Uterus (tissue), 4 donors: ENCODE measurements at regions of chr6 and their contacts with region 1.

Region 1: DNA sequence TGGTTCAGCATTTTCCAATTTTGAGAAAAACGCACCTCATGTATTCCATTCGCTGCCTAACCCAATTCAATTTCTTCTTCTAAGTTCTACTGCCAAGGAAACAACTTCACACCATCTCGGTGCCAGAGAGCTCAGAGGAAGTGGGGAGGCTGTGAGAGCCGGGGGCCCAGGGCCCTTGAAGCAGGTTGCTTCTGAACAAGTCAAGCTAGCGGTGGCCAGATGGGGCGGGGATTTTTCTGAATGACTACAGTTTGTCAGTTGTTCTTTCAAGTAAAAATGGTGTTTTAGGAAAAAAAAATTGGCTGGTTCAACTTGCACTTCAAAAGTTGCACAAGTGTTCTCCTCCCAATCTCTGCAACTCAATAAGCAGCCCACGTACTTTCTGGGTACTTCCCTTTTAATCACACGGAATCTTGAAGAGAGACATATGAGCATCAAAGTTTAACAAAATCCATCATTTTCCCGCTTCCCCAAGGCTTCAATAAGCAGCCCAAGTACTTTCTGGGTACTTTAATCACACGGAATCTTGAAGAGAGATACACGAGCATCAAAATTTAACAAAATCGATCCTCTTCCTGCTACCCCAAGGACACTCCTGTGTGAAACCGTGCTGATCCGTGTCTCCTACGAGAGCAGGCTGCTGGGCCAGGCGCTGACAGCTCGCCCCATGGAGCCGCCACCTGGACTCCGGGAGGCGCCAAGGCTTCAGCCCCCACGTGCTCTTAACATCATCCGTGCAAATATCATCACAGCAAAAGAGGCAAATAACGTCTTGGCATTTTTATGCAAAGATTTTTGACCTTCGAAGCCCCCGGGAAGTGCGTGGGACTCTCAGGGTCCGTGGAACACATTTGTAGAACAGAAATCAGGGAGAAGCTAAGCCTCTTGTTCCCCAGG is 186.7 kb upstream of the PDE10A start:
- DNase-seq: peak; percentile 35 to 50
- H3K4me3 ChIP-seq: peak overlapping the region; percentile 5 to 14
- H3K27ac ChIP-seq: peak overlapping the region; percentile 46 to 51
- H3K4me1 ChIP-seq: peaks cover 0 to 1% of the 10 kb centered on the region in 2 donors
- H3K27me3 ChIP-seq: peaks cover 0 to 3% of the 10 kb centered on the region in 2 donors
- CTCF ChIP-seq: no peak
- POLR2A ChIP-seq: no peak

Region 2: DNA sequence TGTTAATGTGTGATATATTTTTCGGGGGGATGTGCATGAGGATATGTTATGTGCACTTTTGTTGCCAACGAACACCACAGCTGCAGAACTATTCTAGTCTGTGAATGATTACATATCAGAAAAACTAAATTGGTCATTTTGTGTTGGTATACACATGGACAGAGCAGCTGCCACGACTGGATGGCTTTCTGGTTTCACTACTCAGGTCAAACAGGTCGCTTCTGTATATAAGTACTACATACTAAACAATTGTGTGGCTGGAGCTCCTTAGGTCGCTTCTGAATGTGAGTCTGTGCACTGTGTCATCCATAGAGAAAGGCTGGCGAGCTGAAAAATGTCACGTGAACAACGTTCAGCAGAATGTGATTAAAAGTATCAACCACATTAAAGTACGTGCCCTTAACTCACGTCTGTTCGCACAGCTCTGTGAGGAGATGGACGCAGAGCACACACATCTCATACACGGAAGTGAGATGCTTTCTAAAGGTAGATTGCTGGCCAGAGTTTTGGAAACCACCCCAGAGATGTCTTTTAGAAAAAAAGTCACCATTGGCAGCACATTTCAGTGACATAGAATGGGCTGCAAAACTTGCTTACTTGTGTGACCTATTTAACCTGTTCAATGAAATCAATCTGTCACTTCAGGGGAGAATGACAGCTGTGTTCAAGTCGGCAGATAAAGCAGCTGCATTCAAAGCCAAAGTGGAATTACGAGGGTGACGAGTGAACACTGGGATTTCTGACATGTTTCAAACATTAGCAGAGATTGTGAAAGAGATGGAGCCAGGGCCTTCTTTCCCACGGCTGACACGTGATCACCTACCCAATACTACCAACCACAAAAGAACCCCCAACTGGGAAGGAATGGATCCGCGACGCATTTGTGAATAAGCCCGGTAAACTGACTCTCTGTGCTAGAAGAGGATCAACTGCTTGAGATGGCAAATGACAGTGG is 363.3 kb before region 1 on chr6:
- intact Hi-C with region 1: no loop called
- DNase-seq: no peak
- H3K4me3 ChIP-seq: no peak overlapping the region
- H3K27ac ChIP-seq: no peak overlapping the region
- H3K4me1 ChIP-seq: no peaks in the 10 kb centered on the region
- H3K27me3 ChIP-seq: no peaks in the 10 kb centered on the region
- CTCF ChIP-seq: no peak
- POLR2A ChIP-seq: no peak

Region 3: GRCh38 chr6:165556116-165556843 is 293.5 kb before region 1 on chr6:
- intact Hi-C with region 1: no loop called
- DNase-seq: no peak
- H3K4me3 ChIP-seq: no peak overlapping the region
- H3K27ac ChIP-seq: peak overlapping the region in 1 of 2 donors; percentile 9
- H3K4me1 ChIP-seq: no peaks in the 10 kb centered on the region
- H3K27me3 ChIP-seq: no peaks in the 10 kb centered on the region
- CTCF ChIP-seq: no peak
- POLR2A ChIP-seq: no peak

Region 4: GRCh38 chr6:165732696-165733488 is 116.9 kb before region 1 on chr6:
- intact Hi-C with region 1: loop called (anchors 10 kb)
- DNase-seq: no peak
- H3K4me3 ChIP-seq: no peak overlapping the region
- H3K27ac ChIP-seq: no peak overlapping the region
- H3K4me1 ChIP-seq: no peaks in the 10 kb centered on the region
- H3K27me3 ChIP-seq: no peaks in the 10 kb centered on the region
- CTCF ChIP-seq: no peak
- POLR2A ChIP-seq: no peak